HepG2 (cell line): ENCODE measurements at regions of chr1 and their contacts with region 1.

Region 1: GRCh38 chr1:44807262-44808062 is at the start of gene DYNLT4:
- DNase-seq: peak; percentile 98
- ATAC-seq: peak; percentile 83
- H3K4me3 ChIP-seq: peak within 1 kb of the TSS; percentile 70 to 87 (median 78)
- H3K27ac ChIP-seq: peak within 1 kb of the TSS; percentile 100
- H3K4me1 ChIP-seq: peaks cover 73% of the 10 kb centered on the region
- H3K27me3 ChIP-seq: no peaks in the 10 kb centered on the region
- CTCF ChIP-seq: peak; percentile 21
- EP300 ChIP-seq: peak; percentile 71 to 92
- POLR2A ChIP-seq: peak in 1 of 2 experiments; percentile 79; a peak in 2 of 4 replicates
- RAD21 ChIP-seq: no peak
- total RNA-seq, gene DYNLT4: 0.77 TPM in 1 of 2 replicates, not detected in the other

Region 2: DNA sequence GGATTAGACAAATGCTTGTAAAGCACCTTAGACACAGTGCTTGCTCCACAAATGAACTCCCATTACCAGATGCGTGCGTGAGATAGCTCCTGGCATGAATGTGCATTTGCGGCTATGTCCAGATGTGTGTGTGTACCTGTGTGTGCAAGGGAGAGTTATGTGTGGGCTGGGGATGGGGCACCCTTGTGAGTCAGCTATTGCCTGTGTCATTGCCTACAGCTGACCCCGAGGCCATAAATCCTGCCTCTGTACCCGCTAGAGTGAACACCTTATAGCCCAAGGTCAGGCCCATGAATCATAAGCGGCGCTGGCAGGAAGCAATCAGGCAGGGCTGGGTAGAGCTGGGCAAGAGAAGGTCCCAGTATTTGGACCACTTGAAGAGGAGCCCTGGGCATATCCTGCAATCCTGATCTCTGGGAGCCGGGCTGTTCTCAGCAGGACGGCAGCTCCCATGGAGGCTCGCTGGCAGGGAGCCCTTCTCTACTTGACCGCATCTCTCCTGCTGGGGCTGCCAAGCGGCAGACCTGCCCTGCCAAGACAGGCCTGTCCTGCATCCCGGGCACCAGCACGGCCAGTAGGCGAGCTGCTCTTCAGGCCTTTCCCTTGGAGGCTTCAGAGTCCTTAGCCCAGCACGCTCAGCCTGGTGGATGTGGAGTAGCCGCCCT is 219.5 kb before region 1 on chr1:
- CTCF ChIA-PET with region 1: no interaction called
- POLR2A ChIA-PET with region 1: no interaction called
- in situ Hi-C with region 1: no loop called
- intact Hi-C with region 1: no loop called
- DNase-seq: peak; percentile 51
- ATAC-seq: peak; percentile 70
- H3K4me3 ChIP-seq: no peak overlapping the region
- H3K27ac ChIP-seq: no peak overlapping the region
- H3K4me1 ChIP-seq: peaks cover 17% of the 10 kb centered on the region
- H3K27me3 ChIP-seq: peaks cover 0 to 9% of the 10 kb centered on the region in 2 experiments; a peak in 2 of 5 replicates
- CTCF ChIP-seq: no peak
- EP300 ChIP-seq: no peak
- POLR2A ChIP-seq: no peak
- RAD21 ChIP-seq: no peak

Region 3: DNA sequence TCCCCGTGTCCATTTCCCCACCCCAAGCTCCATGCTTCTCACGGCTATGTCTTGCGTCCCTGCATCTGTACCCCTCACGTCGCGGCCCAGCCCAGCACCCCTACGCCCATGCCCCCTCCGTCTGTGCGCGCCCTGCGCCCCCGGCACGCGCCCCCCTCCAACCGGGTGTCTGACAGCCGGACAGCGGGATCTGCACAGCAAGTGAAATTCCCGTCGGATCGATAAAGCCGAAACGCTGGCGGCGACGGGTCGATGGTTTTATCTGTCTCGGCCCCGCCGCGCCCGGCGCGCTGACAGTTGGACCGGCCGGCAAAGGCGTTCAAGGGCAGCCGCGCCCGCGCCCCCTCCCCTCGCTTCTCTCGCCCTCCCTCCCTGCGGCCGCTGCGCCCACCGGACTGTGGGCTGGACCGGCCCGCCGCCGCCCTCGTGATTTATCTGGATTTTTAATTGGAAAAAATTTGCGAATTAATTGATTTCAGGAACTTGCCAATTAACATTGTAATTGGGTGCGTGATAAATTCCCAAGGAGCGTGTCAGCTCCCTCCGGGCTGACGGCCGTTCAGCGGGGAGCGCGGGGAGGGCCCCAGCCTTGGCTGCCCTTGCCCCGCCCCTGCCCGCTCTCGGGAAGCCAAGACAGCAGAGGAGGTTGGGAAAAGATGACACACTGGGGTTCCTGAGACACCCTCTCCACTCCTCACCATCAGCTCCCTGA is 190.3 kb before region 1 on chr1:
- CTCF ChIA-PET with region 1: no interaction called
- POLR2A ChIA-PET with region 1: no interaction called
- in situ Hi-C with region 1: no loop called
- intact Hi-C with region 1: no loop called
- DNase-seq: no peak
- ATAC-seq: peak; percentile 72
- H3K4me3 ChIP-seq: peak overlapping the region in 1 of 3 experiments; percentile 32; a peak in 2 of 6 replicates
- H3K27ac ChIP-seq: no peak overlapping the region
- H3K4me1 ChIP-seq: peaks cover 15% of the 10 kb centered on the region; the same call in 1 of the 2 replicates
- H3K27me3 ChIP-seq: peaks cover 0 to 25% of the 10 kb centered on the region in 2 experiments; a peak in 2 of 5 replicates
- CTCF ChIP-seq: no peak
- EP300 ChIP-seq: no peak
- POLR2A ChIP-seq: no peak
- RAD21 ChIP-seq: no peak

Region 4: GRCh38 chr1:44713321-44713781 is 94.1 kb before region 1 on chr1:
- CTCF ChIA-PET with region 1: no interaction called
- POLR2A ChIA-PET with region 1: no interaction called
- in situ Hi-C with region 1: no loop called
- intact Hi-C with region 1: no loop called
- DNase-seq: no peak
- ATAC-seq: peak; percentile 46; the same call in 2 of the 3 replicates
- H3K4me3 ChIP-seq: no peak overlapping the region
- H3K27ac ChIP-seq: no peak overlapping the region
- H3K4me1 ChIP-seq: peaks cover 33% of the 10 kb centered on the region
- H3K27me3 ChIP-seq: peaks cover 0 to 11% of the 10 kb centered on the region in 2 experiments; a peak in 1 of 5 replicates
- CTCF ChIP-seq: no peak
- EP300 ChIP-seq: no peak
- POLR2A ChIP-seq: no peak
- RAD21 ChIP-seq: no peak

Region 5: DNA sequence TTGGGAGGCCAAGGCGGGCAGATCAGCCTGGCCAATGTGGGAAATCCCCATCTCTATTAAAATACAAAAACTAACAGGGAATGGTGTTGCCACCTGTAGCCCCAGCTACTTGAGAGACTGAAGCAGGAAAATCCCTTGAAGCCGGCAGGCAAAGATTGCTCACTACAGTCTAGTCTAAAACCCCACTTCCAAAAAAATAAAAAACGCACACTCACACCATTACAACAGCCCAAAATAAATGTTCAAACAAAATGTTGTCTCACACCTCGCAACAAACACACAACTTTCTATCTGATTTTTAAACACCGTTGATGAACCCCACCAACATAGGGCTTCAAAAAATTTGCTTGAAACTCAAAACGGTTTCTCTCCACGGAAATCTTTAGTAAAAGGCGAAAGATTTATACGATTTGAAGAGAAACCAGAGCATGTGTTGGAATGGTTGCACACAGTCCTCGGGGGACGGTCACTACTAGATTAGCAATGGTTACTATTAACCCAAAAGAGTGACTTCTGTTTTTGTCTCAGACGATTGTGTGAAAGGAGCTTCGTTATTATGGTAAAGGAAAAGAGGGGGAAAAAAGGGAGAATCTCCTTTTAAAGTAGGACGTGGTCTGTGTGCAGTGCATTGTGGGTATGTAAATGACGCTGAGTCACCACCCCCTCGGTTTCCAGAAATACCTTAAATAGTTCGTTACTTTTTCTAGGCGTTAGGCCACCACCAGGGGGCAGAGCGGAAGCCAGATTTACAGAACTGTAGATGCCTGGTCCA is 76.5 kb before region 1 on chr1 and contains the start of gene RNU5D-1:
- CTCF ChIA-PET with region 1: no interaction called
- POLR2A ChIA-PET with region 1: interaction called, 19 read pairs
- in situ Hi-C with region 1: no loop called
- intact Hi-C with region 1: no loop called
- DNase-seq: peak; percentile 95
- ATAC-seq: peak; percentile 82
- H3K4me3 ChIP-seq: peak within 1 kb of the TSS; percentile 45 to 62 (median 48)
- H3K27ac ChIP-seq: peak within 1 kb of the TSS; percentile 100
- H3K4me1 ChIP-seq: peaks cover 60% of the 10 kb centered on the region
- H3K27me3 ChIP-seq: no peaks in the 10 kb centered on the region; a peak in 2 of 5 replicates
- CTCF ChIP-seq: peak; percentile 79
- EP300 ChIP-seq: peak in 1 of 2 experiments; percentile 27; a peak in 1 of 4 replicates
- POLR2A ChIP-seq: peak; percentile 97 to 100
- RAD21 ChIP-seq: peak; percentile 59
- total RNA-seq, gene RNU5D-1: 165 TPM in 1 of 2 replicates, not detected in the other

Region 6: DNA sequence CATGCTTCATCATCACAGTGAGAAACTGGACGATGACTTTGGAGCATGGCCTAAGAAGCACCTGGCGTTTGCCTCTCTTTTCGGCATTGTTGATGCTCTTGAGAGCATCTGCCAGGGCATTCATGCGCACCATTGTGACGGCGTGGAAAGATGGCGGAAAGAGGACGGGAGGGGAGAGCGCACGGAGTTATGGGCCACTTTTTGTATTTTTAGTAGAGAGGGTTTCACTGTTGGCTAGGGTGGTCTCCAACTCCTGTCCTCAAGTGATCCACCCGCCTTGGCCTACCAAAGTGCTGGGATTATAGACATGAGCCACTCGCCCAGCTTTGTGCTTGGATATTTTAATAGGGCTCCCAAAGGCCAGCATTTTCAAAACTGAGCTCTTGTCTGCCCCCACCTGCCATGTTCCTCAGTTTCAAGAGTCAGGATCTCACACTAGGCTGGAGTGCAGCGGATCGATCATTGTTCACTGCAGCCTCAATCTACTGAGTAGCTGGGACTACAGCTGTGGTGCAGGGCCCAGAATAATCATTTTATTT is 26.8 kb before region 1 on chr1:
- CTCF ChIA-PET with region 1: no interaction called
- POLR2A ChIA-PET with region 1: interaction called, 37 read pairs
- in situ Hi-C with region 1: no loop called
- intact Hi-C with region 1: no loop called
- DNase-seq: no peak
- ATAC-seq: no peak
- H3K4me3 ChIP-seq: no peak overlapping the region
- H3K27ac ChIP-seq: no peak overlapping the region
- H3K4me1 ChIP-seq: peaks cover 51% of the 10 kb centered on the region
- H3K27me3 ChIP-seq: no peaks in the 10 kb centered on the region
- CTCF ChIP-seq: no peak
- EP300 ChIP-seq: no peak
- POLR2A ChIP-seq: peak; percentile 26 to 56; a peak in 2 of 4 replicates
- RAD21 ChIP-seq: no peak

Region 7: DNA sequence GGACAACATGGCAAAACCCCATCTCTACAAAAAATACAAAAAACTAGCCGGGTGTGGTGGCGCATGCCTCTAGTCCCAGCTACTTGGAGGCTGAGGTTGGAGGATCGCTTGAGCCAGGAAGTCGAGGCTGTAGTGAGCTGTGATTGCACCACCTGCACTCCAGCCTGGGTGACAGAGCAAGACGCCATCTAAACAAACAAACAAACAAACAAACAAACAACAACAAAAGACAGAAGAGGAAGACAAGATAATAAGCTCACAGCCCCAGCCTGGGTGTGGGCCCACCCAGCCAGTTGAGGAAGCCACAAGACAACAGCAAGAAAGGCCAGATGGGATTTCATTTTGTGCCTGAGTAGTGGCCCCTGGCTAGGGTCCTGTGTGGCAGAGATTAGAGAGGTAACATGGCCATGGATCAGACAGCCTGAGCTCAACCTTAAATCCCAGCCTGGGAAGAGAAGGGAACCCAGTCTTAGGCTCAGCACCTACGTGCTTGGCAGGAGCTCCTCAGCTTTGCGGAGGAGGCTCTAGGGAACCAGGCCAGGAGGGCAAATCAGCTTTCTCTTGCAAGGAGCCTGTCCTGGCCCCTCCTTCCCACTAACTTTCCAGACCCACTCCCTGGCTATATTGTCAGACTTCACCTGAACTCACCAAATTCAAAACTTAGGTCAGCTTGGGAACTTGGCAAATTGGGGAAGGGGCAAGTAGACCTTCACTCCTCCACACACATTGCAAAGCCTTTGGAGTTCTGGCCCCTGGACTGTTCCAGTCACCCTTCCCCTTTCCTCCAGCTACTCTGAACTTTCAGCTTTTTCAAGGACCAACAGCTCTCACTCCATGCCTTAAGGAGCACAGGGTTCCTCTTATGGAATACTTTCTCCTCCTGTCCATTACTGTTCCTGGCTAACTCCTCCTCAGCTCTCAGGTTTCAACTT is 14.4 kb before region 1 on chr1:
- CTCF ChIA-PET with region 1: no interaction called
- POLR2A ChIA-PET with region 1: interaction called, 237 read pairs
- in situ Hi-C with region 1: no loop called
- intact Hi-C with region 1: loop called (anchors 2 kb)
- DNase-seq: no peak
- ATAC-seq: peak; percentile 6; the same call in 1 of the 3 replicates
- H3K4me3 ChIP-seq: no peak overlapping the region
- H3K27ac ChIP-seq: no peak overlapping the region
- H3K4me1 ChIP-seq: peaks cover 32% of the 10 kb centered on the region
- H3K27me3 ChIP-seq: peaks cover 0 to 8% of the 10 kb centered on the region in 2 experiments; a peak in 2 of 5 replicates
- CTCF ChIP-seq: no peak
- EP300 ChIP-seq: no peak
- POLR2A ChIP-seq: no peak
- RAD21 ChIP-seq: no peak

Region 8: GRCh38 chr1:44985747-44986359 is 178.4 kb after region 1 on chr1:
- CTCF ChIA-PET with region 1: no interaction called
- POLR2A ChIA-PET with region 1: interaction called, 11 read pairs
- in situ Hi-C with region 1: no loop called
- intact Hi-C with region 1: no loop called
- DNase-seq: no peak
- ATAC-seq: peak; percentile 51
- H3K4me3 ChIP-seq: peak overlapping the region; percentile 62 to 87 (median 79)
- H3K27ac ChIP-seq: peak overlapping the region; percentile 45
- H3K4me1 ChIP-seq: peaks cover 15% of the 10 kb centered on the region
- H3K27me3 ChIP-seq: no peaks in the 10 kb centered on the region; a peak in 1 of 5 replicates
- CTCF ChIP-seq: no peak
- EP300 ChIP-seq: no peak
- POLR2A ChIP-seq: no peak
- RAD21 ChIP-seq: no peak